OCI-LY7 (cell line): ENCODE measurements at regions of chr16 and their contacts with region 1.

Region 1: GRCh38 chr16:30698139-30698815 is 694 bp upstream of the SRCAP start:
- DNase-seq: peak; percentile 99
- H3K4me3 ChIP-seq: peak overlapping the region; percentile 97
- H3K27ac ChIP-seq: peak overlapping the region; percentile 87
- H3K4me1 ChIP-seq: peaks cover 26% of the 10 kb centered on the region
- CTCF ChIP-seq: no peak

Region 2: DNA sequence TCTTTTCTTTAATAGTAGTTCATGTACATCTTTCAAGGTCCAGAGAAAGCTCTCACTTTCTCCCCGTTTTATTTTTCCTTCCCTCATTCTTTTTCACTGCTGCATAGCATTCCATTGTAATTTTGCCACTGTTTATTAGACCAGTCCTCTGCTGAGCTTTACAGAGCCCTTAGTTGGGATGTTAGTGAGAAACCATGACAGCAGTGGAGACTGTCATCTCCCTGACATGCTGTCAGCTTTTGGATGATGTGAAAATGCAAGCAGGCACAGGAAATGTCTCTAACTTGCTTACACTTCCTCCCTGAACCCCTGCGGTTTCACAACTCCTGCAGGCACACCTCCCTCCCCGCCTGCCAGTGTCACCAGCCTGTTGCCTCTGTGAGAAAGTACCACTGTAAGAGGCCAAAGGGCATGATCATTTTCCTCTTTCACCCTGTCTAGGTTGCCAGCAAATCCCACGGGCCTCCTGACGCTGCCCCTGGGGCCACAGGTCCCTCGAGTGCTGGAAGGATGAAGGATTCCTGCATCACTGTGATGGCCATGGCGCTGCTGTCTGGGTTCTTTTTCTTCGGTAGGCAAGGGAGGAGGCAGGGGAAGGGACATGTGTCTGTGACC is 225.8 kb before region 1 on chr16 and contains the start of gene ITGAL:
- CTCF ChIA-PET with region 1: no interaction called
- POLR2A ChIA-PET with region 1: no interaction called
- intact Hi-C with region 1: loop called (anchors 2 kb)
- DNase-seq: peak; percentile 90
- H3K4me3 ChIP-seq: peak within 1 kb of the TSS; percentile 77
- H3K27ac ChIP-seq: peak within 1 kb of the TSS; percentile 95
- H3K4me1 ChIP-seq: peaks cover 61% of the 10 kb centered on the region
- CTCF ChIP-seq: no peak
- total RNA-seq, gene ITGAL: 30.7 and 40.2 TPM in 2 replicates

Region 3: GRCh38 chr16:30650369-30651123 is 47.7 kb before region 1 on chr16 and contains the start of gene PRR14:
- CTCF ChIA-PET with region 1: interaction called, 3 read pairs
- POLR2A ChIA-PET with region 1: interaction called, 5 read pairs
- intact Hi-C with region 1: loop called (anchors 2 kb)
- DNase-seq: peak; percentile 99
- H3K4me3 ChIP-seq: peak within 1 kb of the TSS; percentile 86
- H3K27ac ChIP-seq: peak within 1 kb of the TSS; percentile 75
- H3K4me1 ChIP-seq: peaks cover 17% of the 10 kb centered on the region
- CTCF ChIP-seq: no peak
- total RNA-seq, gene PRR14: 33.2 and 35.2 TPM in 2 replicates

Region 4: DNA sequence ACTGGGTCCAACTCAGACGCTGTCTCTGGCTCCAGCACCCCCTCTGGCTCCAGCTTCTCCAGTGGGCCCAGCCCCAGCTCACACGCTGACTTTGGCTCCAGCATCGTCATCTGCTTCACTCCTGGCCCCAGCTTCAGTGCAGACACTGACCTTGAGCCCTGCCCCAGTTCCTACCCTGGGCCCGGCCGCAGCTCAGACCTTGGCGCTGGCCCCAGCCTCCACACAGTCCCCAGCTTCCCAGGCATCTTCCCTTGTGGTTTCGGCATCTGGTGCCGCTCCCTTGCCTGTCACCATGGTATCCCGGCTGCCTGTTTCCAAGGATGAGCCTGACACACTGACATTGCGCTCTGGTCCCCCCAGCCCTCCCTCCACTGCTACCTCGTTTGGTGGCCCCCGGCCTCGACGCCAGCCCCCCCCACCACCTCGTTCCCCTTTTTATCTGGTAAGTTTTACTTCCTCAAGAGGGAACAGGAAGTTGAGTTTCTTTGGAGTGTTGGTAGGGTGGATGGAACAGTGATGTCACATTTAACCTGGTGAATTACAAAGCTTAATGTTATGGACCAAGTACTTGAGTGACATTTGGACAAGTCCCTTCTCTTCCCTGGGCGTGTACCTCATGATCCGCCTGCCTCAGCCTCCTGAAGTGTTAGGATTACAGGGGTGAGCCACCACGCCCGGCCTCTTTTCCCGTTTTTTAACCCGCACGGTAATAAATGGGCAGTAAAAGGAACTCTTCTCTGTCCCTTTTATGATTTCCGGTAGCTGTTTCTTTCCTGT is 26.6 kb after region 1 on chr16:
- CTCF ChIA-PET with region 1: no interaction called
- POLR2A ChIA-PET with region 1: no interaction called
- intact Hi-C with region 1: no loop called
- DNase-seq: no peak
- H3K4me3 ChIP-seq: no peak overlapping the region
- H3K27ac ChIP-seq: no peak overlapping the region
- H3K4me1 ChIP-seq: no peaks in the 10 kb centered on the region
- CTCF ChIP-seq: no peak

Region 5: DNA sequence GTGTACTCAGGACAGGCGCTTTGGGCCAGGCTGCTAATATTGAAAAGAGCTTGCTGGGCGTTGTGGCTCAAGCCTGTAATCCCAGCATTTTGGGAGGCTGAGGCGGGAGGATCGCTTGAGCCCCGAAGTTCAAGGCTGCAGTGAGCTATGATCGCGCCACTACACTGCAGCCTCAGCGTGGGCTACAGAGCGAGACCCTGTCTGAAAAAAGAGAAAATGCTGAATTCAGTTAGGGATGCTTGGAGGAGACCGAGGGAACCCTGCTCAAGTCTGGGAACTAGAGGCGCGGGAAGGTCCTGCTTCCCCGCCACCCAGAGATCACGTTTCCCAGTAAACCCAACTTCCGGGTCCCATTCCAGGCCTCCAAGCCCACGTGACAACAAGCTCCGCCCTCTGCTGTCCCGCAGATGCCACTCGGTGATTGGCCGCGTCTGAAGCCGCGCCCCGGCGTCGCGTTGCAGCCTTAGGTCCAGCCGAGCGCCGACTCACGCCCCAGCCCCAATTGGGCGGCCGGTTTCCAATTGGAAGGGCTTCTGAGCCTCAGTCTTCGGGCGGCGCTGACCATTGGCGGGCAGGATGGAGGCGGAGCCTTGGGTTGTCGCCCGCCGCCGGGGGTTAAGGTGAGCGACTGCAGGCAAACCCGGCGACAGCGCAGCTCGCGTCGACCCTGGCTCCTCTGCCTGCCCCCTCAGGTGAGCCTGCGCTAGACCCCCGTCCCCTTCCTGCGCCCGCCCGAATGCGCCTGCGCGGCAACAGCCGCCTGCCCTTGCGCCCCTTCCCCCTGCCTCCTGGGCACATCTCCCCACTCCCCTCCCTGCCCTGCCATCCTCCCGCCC is 49.7 kb after region 1 on chr16 and contains the start of gene PHKG2:
- CTCF ChIA-PET with region 1: interaction called, 4 read pairs
- POLR2A ChIA-PET with region 1: interaction called, 3 read pairs
- intact Hi-C with region 1: loop called (anchors 1 kb)
- DNase-seq: peak; percentile 99
- H3K4me3 ChIP-seq: peak within 1 kb of the TSS; percentile 87
- H3K27ac ChIP-seq: peak within 1 kb of the TSS; percentile 40
- H3K4me1 ChIP-seq: peaks cover 15% of the 10 kb centered on the region
- CTCF ChIP-seq: no peak
- total RNA-seq, gene PHKG2: 37.6 and 40.5 TPM in 2 replicates

Region 6: DNA sequence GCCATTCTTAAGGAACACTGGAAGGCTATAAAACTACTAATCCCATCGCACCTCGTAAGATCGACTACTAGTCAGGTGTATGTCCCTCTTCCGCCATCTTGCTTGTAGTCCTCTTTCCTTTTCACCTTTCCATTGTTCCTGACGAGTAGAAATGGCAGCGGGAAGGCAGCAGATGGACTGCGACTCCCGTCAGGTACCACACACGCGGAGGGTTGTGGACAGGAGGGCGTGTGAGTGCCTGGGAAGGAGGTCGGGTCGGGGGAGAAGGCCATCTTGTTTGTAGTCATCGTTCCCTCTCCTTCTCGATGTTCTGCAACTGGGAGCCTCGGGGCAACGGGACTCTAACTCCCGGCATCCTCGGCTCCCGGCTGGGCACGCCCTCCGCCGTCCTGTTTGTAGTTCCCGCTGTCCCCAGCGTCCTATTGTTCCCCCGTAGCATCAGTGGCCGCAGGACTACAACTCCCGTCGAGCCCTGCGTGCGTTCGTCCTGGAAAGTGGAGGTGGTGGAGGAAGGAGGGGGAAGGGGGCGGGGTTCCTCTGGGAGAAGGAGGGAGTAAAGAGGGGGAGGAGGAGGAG is 224.8 kb after region 1 on chr16:
- CTCF ChIA-PET with region 1: no interaction called
- POLR2A ChIA-PET with region 1: no interaction called
- intact Hi-C with region 1: loop called (anchors 1 kb)
- DNase-seq: peak; percentile 99
- H3K4me3 ChIP-seq: peak overlapping the region; percentile 74
- H3K27ac ChIP-seq: peak overlapping the region; percentile 74
- H3K4me1 ChIP-seq: peaks cover 16% of the 10 kb centered on the region
- CTCF ChIP-seq: no peak